CD8-positive, alpha-beta T cell (primary cell): ENCODE measurements at regions of chr12 and their contacts with region 1.

Region 1: DNA sequence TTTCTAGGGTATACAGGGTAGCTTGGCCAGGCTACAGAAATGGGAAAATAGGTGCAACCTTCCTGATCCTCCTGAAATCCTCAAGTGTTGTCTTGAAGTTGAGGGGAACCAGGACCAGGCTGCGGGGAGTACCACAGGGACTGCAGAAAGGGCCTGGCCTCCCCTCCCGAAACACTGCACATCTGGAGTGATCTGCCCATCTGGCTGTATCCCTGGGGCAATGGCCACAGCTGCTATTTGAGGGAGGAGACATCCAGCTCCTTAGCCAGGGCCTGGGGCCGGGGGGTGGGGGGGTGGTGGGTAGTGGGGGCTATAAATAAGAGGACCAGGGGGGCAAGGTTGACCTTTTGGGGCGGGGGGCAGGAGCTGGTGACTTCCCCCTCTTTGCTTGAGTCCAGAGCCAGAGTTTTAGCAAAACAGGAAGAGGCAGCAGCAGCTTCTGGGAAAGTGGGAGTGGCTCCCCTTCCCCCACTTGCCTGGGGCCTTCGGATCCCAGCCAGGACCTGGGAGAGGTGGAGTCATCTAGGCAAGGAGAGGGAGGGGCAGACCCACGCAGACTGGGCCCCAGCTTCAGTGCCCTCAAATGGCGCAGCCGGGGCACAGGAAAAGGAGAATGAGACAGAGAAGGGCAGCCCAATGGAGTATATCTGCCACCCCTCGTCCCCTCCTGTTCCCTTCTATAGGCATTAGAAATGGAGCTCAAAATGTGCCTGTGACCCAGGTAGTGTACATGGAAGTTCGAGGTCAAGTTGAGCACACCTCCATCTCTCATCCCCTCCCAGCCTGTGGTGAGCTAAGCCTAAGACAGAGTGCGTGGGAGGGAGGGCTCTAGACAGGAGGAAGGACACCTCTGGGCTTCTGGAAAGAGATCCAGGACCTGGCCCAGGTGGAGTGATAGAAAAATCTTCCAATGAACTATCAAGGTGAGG is 9.2 kb upstream of the HDAC7 start:
- DNase-seq: no peak
- ATAC-seq: no peak
- H3K4me3 ChIP-seq: no peak overlapping the region
- H3K4me3 Mint-ChIP-seq: no peak overlapping the region
- H3K27ac ChIP-seq: no peak overlapping the region
- H3K27ac Mint-ChIP-seq: peak overlapping the region; percentile 64
- H3K4me1 ChIP-seq: peaks cover 95% of the 10 kb centered on the region
- H3K4me1 Mint-ChIP-seq: peaks cover 84% of the 10 kb centered on the region
- H3K27me3 ChIP-seq: no peaks in the 10 kb centered on the region
- H3K27me3 Mint-ChIP-seq: no peaks in the 10 kb centered on the region
- CTCF ChIP-seq: no peak

Region 2: DNA sequence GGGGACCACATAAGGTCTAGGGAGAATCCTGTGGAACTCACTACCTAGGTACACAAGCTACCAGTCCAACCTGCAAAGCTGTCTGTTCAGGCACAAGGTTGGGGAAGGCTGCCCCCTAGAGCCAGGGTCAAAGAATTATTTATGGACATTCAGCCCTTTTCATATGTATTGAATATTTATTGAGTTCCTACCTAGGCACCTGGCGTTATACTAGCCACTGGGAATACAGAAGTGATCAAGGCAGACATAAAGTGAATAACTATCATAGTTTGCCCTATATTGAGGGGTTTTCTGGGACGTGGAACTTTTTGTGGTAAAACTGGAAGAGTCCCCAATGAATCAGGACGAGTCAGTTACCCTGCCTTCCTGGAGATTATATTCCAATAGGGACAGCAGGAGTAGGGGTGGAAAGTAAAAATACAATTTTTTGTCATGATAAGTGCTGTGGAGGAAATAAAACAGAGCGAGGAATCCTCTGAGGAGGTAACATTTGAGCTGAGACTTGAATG is 61.6 kb before region 1 on chr12:
- CTCF ChIA-PET with region 1: interaction called, 128 read pairs
- POLR2A ChIA-PET with region 1: no interaction called
- intact Hi-C with region 1: no loop called
- DNase-seq: peak; percentile 46 to 83 (median 73)
- ATAC-seq: peak; percentile 76
- H3K4me3 ChIP-seq: no peak overlapping the region
- H3K4me3 Mint-ChIP-seq: no peak overlapping the region
- H3K27ac ChIP-seq: no peak overlapping the region
- H3K27ac Mint-ChIP-seq: no peak overlapping the region
- H3K4me1 ChIP-seq: peaks cover 28% of the 10 kb centered on the region
- H3K4me1 Mint-ChIP-seq: peaks cover 23% of the 10 kb centered on the region
- H3K27me3 ChIP-seq: no peaks in the 10 kb centered on the region
- H3K27me3 Mint-ChIP-seq: no peaks in the 10 kb centered on the region
- CTCF ChIP-seq: peak; percentile 58

Region 3: GRCh38 chr12:47812797-47813510 is 15.9 kb before region 1 on chr12:
- CTCF ChIA-PET with region 1: interaction called, 728 read pairs
- POLR2A ChIA-PET with region 1: interaction called, 87 read pairs
- intact Hi-C with region 1: loop called in 1 of 2 experiments (anchors 1 kb)
- DNase-seq: peak; percentile 77 to 95 (median 92)
- ATAC-seq: peak; percentile 73
- H3K4me3 ChIP-seq: peak overlapping the region; percentile 44 to 59
- H3K4me3 Mint-ChIP-seq: peak overlapping the region; percentile 82
- H3K27ac ChIP-seq: peak overlapping the region; percentile 65 to 73
- H3K27ac Mint-ChIP-seq: peak overlapping the region; percentile 97
- H3K4me1 ChIP-seq: peaks cover 95% of the 10 kb centered on the region
- H3K4me1 Mint-ChIP-seq: peaks cover 93% of the 10 kb centered on the region
- H3K27me3 ChIP-seq: no peaks in the 10 kb centered on the region
- H3K27me3 Mint-ChIP-seq: no peaks in the 10 kb centered on the region
- CTCF ChIP-seq: no peak